Mammary epithelial cell (primary cell): ENCODE measurements at regions of chr4 and their contacts with region 1.

Region 1: GRCh38 chr4:39864403-39864802 is 113.3 kb downstream of the PDS5A start:
- DNase-seq: no peak
- H3K4me3 ChIP-seq: no peak overlapping the region
- H3K27ac ChIP-seq: no peak overlapping the region
- H3K4me1 ChIP-seq: no peaks in the 10 kb centered on the region
- H3K27me3 ChIP-seq: no peaks in the 10 kb centered on the region
- CTCF ChIP-seq: no peak

Region 2: GRCh38 chr4:39900966-39901365 is 36.6 kb after region 1 on chr4:
- CTCF ChIA-PET with region 1: no interaction called
- dilution Hi-C with region 1: loop called (anchors 5 kb)
- in situ Hi-C with region 1: no loop called
- intact Hi-C with region 1: no loop called
- DNase-seq: no peak
- H3K4me3 ChIP-seq: no peak overlapping the region
- H3K27ac ChIP-seq: no peak overlapping the region
- H3K4me1 ChIP-seq: no peaks in the 10 kb centered on the region
- H3K27me3 ChIP-seq: no peaks in the 10 kb centered on the region
- CTCF ChIP-seq: no peak